Activated CD4-positive, alpha-beta memory T cell treated with anti-CD3 and anti-CD28 coated beads for 36 hours (primary cell): ENCODE measurements at regions of chr1 and their contacts with region 1.

Region 1: GRCh38 chr1:17053685-17054410 is at the start of gene SDHB:
- DNase-seq: peak; percentile 100
- H3K4me3 Mint-ChIP-seq: peak within 1 kb of the TSS; percentile 96
- H3K27ac Mint-ChIP-seq: peak within 1 kb of the TSS; percentile 90
- H3K4me1 Mint-ChIP-seq: peaks cover 24% of the 10 kb centered on the region
- H3K27me3 Mint-ChIP-seq: no peaks in the 10 kb centered on the region
- total RNA-seq, gene SDHB: 154 to 163 TPM

Region 2: GRCh38 chr1:16938351-16939321 is 115.2 kb before region 1 on chr1:
- CTCF ChIA-PET with region 1: no interaction called
- POLR2A ChIA-PET with region 1: no interaction called
- intact Hi-C with region 1: no loop called
- DNase-seq: no peak
- H3K4me3 Mint-ChIP-seq: no peak overlapping the region
- H3K27ac Mint-ChIP-seq: no peak overlapping the region
- H3K4me1 Mint-ChIP-seq: no peaks in the 10 kb centered on the region
- H3K27me3 Mint-ChIP-seq: no peaks in the 10 kb centered on the region

Region 3: DNA sequence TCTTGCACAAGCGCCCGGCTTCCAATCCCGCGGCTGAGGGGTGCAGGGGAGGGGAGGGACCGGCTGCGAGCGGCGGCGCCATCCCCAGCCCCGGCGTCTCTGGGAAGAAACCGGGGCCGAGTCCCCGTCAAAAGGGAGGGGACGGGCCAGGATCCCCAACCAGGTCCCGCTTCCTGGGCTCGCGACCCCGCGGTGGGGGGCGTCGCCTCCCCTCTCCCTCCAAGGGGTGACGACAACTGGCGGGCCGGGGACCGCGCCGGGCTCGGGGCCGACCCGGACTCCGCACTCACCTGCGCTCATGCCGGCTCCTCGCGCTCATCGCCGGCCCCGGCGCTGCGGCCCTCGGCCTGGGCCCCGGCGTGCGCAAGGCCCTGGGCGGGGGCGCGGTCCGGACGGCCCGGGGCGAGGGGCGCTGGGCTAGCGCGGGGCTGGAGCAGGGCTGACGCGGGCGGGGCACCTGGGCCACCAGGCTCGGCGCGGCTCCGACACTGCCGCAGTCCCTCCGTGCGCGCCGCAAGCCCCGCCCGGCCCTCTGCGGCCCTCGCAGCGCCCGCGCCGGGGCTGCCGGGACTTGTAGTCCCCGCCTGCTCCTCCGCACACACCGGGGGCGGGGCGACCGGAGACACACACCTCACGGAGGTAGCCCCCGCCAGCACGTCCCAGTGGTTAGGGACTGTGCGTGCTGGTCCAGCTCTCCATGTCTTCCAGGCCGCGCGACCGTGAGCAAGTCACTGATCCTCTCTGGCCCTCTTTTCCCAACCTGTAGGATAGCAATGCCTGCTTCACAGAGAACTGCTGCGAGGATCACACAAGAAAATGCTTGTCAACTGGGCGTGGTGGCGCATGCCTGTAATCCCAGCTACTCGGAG is 42.2 kb before region 1 on chr1 and contains the start of gene ATP13A2:
- CTCF ChIA-PET with region 1: no interaction called
- POLR2A ChIA-PET with region 1: no interaction called
- intact Hi-C with region 1: loop called (anchors 1 kb)
- DNase-seq: peak; percentile 85
- H3K4me3 Mint-ChIP-seq: peak within 1 kb of the TSS; percentile 84
- H3K27ac Mint-ChIP-seq: peak within 1 kb of the TSS; percentile 28
- H3K4me1 Mint-ChIP-seq: peaks cover 14% of the 10 kb centered on the region
- H3K27me3 Mint-ChIP-seq: no peaks in the 10 kb centered on the region
- total RNA-seq, gene ATP13A2: 41.8 to 45.9 TPM